ENCODE measurements at regions of chr7 and their contacts with region 1.

Region 1: DNA sequence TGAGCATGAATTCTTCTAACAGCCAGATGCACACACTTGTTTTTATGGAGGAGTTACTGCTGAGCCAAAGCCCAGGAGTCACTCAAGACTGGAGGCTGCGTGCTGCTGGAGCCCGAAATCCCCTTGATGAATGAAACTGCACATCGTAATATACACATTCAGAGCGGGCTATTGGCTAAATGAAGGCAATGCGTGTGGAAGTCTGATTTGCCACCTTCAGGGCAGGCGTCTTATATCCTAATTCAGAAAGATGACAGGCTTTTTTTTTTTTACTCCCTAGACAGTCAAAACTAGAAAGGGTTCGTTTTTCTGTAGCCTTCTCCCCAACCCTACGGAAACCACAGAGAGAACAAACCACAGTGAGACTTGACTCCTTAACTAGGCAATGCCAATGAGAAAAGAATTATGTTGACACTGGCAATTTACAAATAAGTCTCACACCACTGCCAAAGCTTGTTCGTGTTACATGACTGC is 227.2 kb upstream of the KLF14 start:
- DNase-seq: peak in 1 of 2 experiments; percentile 47
- H3K4me3 ChIP-seq: peak overlapping the region; percentile 30; the same call in 1 of the 2 replicates
- H3K27ac ChIP-seq: peak overlapping the region; percentile 97
- H3K4me1 ChIP-seq: peaks cover 38% of the 10 kb centered on the region
- H3K27me3 ChIP-seq: no peaks in the 10 kb centered on the region
- CTCF ChIP-seq: no peak

Region 2: DNA sequence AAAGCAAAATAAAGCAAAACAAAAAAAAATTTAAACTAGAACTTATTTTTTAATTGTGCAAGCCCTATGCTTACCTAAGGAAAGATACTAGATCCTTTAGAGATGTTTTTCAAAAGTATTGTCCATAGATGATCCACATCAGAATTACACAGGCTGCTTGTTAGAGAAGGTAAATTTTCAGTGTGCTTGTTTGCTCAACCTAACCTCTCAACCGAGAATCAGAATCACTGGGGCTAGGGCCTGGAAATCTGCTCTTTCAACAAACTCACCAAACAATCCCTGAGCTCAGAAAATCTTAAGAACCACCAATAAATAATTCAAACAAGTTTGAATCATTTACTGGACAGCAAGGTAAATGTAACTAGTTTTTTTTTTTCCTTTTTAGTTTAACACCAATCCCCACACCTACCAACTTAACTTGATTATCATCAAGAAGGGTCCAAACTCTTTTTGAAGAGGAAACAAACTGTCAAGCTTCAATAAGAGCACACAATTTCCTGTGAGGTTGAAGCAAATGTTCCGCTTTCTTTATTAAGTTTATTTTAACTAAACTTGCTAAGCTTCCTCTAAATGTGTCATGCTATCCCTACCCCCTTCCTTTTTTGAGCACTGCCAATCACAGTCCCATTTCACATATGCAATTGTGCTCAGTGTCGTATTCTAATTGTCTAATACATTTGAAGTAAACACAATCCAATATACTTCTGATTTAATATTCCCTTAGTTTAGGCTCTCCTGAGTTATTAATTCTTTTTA is 1824.1 kb before region 1 on chr7:
- CTCF ChIA-PET with region 1: no interaction called
- POLR2A ChIA-PET with region 1: interaction called, 21 read pairs
- intact Hi-C with region 1: no loop called
- DNase-seq: no peak
- H3K4me3 ChIP-seq: no peak overlapping the region
- H3K27ac ChIP-seq: no peak overlapping the region
- H3K4me1 ChIP-seq: no peaks in the 10 kb centered on the region
- H3K27me3 ChIP-seq: 0 out of 2 replicates have a peak, but pooled peaks cover under 1% of the 10 kb centered on the region
- CTCF ChIP-seq: no peak

Region 3: GRCh38 chr7:130904031-130904757 is 57.0 kb before region 1 on chr7:
- CTCF ChIA-PET with region 1: interaction called, 7 read pairs
- POLR2A ChIA-PET with region 1: interaction called, 9 read pairs
- intact Hi-C with region 1: loop called (anchors 2 kb)
- DNase-seq: peak; percentile 81 to 99
- H3K4me3 ChIP-seq: peak overlapping the region; percentile 96; the same call in 1 of the 2 replicates
- H3K27ac ChIP-seq: peak overlapping the region; percentile 99
- H3K4me1 ChIP-seq: peaks cover 97% of the 10 kb centered on the region
- H3K27me3 ChIP-seq: no peaks in the 10 kb centered on the region
- CTCF ChIP-seq: no peak

Region 4: DNA sequence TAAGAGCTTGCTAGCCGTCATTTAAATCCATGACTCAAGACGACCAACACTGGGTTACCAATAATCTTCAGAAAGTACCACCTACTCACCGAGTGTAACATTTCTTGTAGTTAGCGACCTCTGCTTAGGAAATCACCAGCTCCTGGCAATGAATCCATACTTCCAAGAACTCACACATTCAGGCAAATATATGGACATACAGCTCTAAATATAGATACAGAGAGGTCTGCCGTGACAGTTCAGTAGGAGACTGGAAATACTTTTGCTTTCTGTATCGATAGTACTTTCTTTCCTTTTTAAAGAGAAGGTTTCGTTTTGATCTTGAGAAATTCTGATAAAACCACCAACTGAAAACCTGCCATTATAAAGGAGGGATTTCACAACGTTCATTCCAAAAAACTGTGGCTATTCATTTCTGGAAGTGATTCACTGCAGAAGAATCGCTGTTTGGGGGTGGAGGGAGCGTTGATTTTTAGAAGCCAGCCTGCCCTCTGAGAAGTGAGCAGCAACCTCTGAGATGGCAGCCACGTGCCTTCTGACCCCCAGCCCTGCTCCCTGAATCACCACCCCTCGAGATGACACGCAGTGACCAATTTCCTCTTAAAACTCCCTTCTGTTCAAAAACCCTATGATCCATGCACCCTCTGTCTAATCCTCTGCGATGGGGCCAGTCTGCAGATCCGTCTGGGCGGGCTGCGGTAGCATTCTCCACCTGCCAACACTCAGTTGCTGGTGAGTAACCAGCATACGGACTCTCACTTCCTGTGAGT is 48.1 kb before region 1 on chr7:
- CTCF ChIA-PET with region 1: interaction called, 11 read pairs
- POLR2A ChIA-PET with region 1: interaction called, 11 read pairs
- intact Hi-C with region 1: loop called (anchors 1 kb)
- DNase-seq: peak; percentile 89 to 97
- H3K4me3 ChIP-seq: peak overlapping the region; percentile 96
- H3K27ac ChIP-seq: peak overlapping the region; percentile 99
- H3K4me1 ChIP-seq: peaks cover 58% of the 10 kb centered on the region
- H3K27me3 ChIP-seq: no peaks in the 10 kb centered on the region
- CTCF ChIP-seq: no peak

Region 5: GRCh38 chr7:130939321-130940095 is 21.7 kb before region 1 on chr7:
- CTCF ChIA-PET with region 1: interaction called, 12 read pairs
- POLR2A ChIA-PET with region 1: no interaction called
- intact Hi-C with region 1: no loop called
- DNase-seq: no peak
- H3K4me3 ChIP-seq: no peak overlapping the region
- H3K27ac ChIP-seq: no peak overlapping the region
- H3K4me1 ChIP-seq: no peaks in the 10 kb centered on the region
- H3K27me3 ChIP-seq: no peaks in the 10 kb centered on the region
- CTCF ChIP-seq: no peak

Region 6: GRCh38 chr7:130982160-130982638 is 21.0 kb after region 1 on chr7:
- CTCF ChIA-PET with region 1: interaction called, 12 read pairs
- POLR2A ChIA-PET with region 1: no interaction called
- intact Hi-C with region 1: no loop called
- DNase-seq: peak; percentile 12 to 74
- H3K4me3 ChIP-seq: no peak overlapping the region
- H3K27ac ChIP-seq: peak overlapping the region; percentile 17
- H3K4me1 ChIP-seq: 0 out of 2 replicates have a peak, but pooled peaks cover 7% of the 10 kb centered on the region
- H3K27me3 ChIP-seq: no peaks in the 10 kb centered on the region
- CTCF ChIP-seq: peak; percentile 86

Region 7: GRCh38 chr7:131007394-131008330 is 46.5 kb after region 1 on chr7:
- CTCF ChIA-PET with region 1: interaction called, 5 read pairs
- POLR2A ChIA-PET with region 1: interaction called, 3 read pairs
- intact Hi-C with region 1: loop called (anchors 5 kb)
- DNase-seq: peak; percentile 70 to 97
- H3K4me3 ChIP-seq: no peak overlapping the region
- H3K27ac ChIP-seq: peak overlapping the region; percentile 64
- H3K4me1 ChIP-seq: peaks cover 67% of the 10 kb centered on the region
- H3K27me3 ChIP-seq: no peaks in the 10 kb centered on the region
- CTCF ChIP-seq: peak; percentile 71; the same call in 1 of the 2 replicates

Region 8: DNA sequence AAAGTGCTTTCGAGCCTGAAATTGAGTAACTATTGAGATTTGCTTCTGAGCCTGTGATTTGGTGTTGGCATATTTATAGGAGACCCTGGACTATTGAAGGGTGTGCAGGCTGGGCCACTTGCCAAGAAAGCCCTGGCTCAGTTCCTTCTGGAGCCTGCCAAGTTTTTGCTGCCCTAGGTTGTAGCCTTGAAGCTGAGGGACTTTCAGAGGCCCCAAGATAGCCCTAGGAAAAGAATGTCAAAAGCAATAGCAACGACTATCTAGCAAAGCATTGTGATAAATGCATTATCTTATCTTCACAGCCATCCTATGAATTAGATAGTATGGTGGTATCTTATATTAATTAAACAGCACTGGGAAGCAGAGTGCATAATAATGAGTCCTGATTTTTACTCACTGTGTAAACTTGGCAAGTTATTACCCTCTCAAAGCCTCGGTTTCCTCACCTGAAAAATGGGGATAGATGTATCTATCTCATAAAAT is 1069.0 kb after region 1 on chr7:
- CTCF ChIA-PET with region 1: no interaction called
- POLR2A ChIA-PET with region 1: no interaction called
- intact Hi-C with region 1: no loop called
- DNase-seq: peak in 1 of 2 experiments; percentile 69
- H3K4me3 ChIP-seq: no peak overlapping the region; the same call in 1 of the 2 replicates
- H3K27ac ChIP-seq: peak overlapping the region; percentile 66
- H3K4me1 ChIP-seq: peaks cover 38% of the 10 kb centered on the region
- H3K27me3 ChIP-seq: no peaks in the 10 kb centered on the region
- CTCF ChIP-seq: no peak

Measured in PC-9 (cell line).